A549 (cell line): ENCODE measurements at regions of chr12 and their contacts with region 1.

Region 1: GRCh38 chr12:119544765-119545625 is 48.6 kb upstream of the TMEM233 start:
- DNase-seq: peak; percentile 69 to 75
- ATAC-seq: peak; percentile 81 to 95
- H3K4me3 ChIP-seq: no peak overlapping the region
- H3K27ac ChIP-seq: no peak overlapping the region
- H3K4me1 ChIP-seq: no peaks in the 10 kb centered on the region
- CTCF ChIP-seq: peak; percentile 83
- EP300 ChIP-seq: no peak
- POLR2A ChIP-seq: no peak
- RAD21 ChIP-seq: peak; percentile 86 to 94

Region 2: GRCh38 chr12:118377884-118378470 is 1167.0 kb before region 1 on chr12:
- CTCF ChIA-PET with region 1: interaction called, 11 read pairs
- POLR2A ChIA-PET with region 1: no interaction called
- DNase-seq: peak; percentile 58 to 75
- ATAC-seq: peak; percentile 3 to 11; a peak in 3 of 6 replicates
- H3K4me3 ChIP-seq: peak overlapping the region; percentile 91
- H3K27ac ChIP-seq: peak overlapping the region; percentile 95 to 96; a peak in 5 of 6 replicates
- H3K4me1 ChIP-seq: peaks cover 15% of the 10 kb centered on the region
- CTCF ChIP-seq: peak; percentile 96
- EP300 ChIP-seq: no peak
- POLR2A ChIP-seq: no peak
- RAD21 ChIP-seq: peak; percentile 47 to 51; a peak in 4 of 5 replicates

Region 3: DNA sequence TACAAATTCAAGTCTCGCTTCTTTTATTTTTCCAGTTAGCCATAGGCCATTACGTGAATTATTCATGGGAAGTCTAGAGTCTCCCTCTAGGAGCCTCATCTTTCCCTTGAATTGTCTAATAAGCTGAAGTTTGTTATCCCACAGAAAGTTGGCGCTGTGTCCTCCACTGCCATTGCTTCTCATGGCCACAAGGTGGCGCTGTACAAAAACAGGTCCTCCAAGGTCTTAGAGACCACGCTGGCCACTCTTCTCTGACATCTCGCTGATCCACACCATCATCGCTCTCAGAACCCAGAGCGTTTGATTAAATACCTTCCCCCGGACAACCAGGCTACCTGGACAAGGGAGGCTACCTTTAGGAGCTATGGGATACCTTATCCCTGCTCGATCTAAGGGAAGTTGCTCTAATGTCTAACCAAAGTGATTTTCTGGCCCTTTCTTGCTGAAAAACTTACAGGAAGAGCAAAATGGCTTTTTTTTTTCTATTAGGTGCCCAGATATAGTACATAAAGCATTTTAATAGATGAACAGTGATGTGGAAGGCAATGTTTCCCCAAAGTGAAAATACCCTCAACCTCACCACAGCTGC is 100.4 kb before region 1 on chr12:
- CTCF ChIA-PET with region 1: interaction called, 98 read pairs
- POLR2A ChIA-PET with region 1: interaction called, 5 read pairs
- DNase-seq: peak; percentile 46 to 85
- ATAC-seq: peak; percentile 21 to 87; a peak in 4 of 6 replicates
- H3K4me3 ChIP-seq: no peak overlapping the region; the same call in 2 of the 3 replicates
- H3K27ac ChIP-seq: no peak overlapping the region
- H3K4me1 ChIP-seq: peaks cover 33% of the 10 kb centered on the region
- CTCF ChIP-seq: peak; percentile 73
- EP300 ChIP-seq: no peak
- POLR2A ChIP-seq: no peak
- RAD21 ChIP-seq: peak; percentile 45 to 64; a peak in 4 of 5 replicates

Region 4: GRCh38 chr12:119925269-119925668 is 380.3 kb after region 1 on chr12:
- CTCF ChIA-PET with region 1: no interaction called
- POLR2A ChIA-PET with region 1: no interaction called
- DNase-seq: no peak
- ATAC-seq: no peak; a peak in 3 of 6 replicates
- H3K4me3 ChIP-seq: no peak overlapping the region
- H3K27ac ChIP-seq: no peak overlapping the region
- H3K4me1 ChIP-seq: no peaks in the 10 kb centered on the region
- CTCF ChIP-seq: no peak
- EP300 ChIP-seq: no peak
- POLR2A ChIP-seq: no peak
- RAD21 ChIP-seq: no peak

Region 5: GRCh38 chr12:119949145-119949544 is 404.1 kb after region 1 on chr12:
- CTCF ChIA-PET with region 1: no interaction called
- POLR2A ChIA-PET with region 1: no interaction called
- DNase-seq: no peak
- ATAC-seq: no peak
- H3K4me3 ChIP-seq: no peak overlapping the region
- H3K27ac ChIP-seq: no peak overlapping the region
- H3K4me1 ChIP-seq: no peaks in the 10 kb centered on the region
- CTCF ChIP-seq: no peak
- EP300 ChIP-seq: no peak
- POLR2A ChIP-seq: no peak
- RAD21 ChIP-seq: no peak